Endothelial cell of umbilical vein (primary cell): ENCODE measurements at regions of chr22 and their contacts with region 1.

Region 1: DNA sequence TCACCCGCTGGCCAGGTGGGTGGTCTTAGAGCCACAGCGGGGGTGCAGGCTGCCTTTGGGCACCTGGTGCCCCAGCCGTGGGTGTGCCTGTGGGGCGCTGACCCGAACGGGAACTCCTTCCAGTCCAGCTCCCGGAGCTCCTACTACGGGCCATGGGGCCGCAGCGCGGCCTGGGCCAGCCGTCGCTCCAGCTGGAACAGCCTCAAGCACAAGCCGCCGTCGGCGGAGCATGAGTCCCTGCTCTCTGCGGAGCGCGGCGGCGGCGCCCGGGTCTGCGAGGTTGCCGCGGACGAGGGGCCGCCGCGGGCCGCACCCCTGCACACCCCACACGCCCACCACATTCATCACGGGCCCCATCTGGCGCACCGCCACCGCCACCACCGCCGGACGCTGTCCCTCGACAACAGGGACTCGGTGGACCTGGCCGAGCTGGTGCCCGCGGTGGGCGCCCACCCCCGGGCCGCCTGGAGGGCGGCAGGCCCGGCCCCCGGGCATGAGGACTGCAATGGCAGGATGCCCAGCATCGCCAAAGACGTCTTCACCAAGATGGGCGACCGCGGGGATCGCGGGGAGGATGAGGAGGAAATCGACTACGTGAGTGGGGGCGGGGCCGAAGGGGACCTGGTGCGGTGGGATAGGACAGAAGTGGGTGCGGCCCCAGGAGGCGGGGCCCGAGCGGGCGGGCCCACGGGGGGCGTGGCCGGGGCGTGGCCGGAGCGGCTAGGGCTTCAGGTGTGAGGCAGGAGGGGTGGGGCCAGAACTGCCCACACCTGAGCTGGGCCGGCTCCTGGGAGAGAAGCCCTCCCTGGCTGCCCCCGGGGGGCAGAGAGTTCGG is 91.5 kb downstream of the CACNA1I start:
- DNase-seq: no peak
- H3K4me3 ChIP-seq: no peak overlapping the region
- H3K27ac ChIP-seq: no peak overlapping the region
- H3K4me1 ChIP-seq: no peaks in the 10 kb centered on the region
- H3K27me3 ChIP-seq: peaks cover 25% of the 10 kb centered on the region in 2 experiments
- CTCF ChIP-seq: no peak
- POLR2A ChIP-seq: no peak

Region 2: GRCh38 chr22:39543095-39543494 is 119.0 kb before region 1 on chr22:
- CTCF ChIA-PET with region 1: no interaction called
- POLR2A ChIA-PET with region 1: no interaction called
- dilution Hi-C with region 1: no loop called
- intact Hi-C with region 1: no loop called
- DNase-seq: no peak
- H3K4me3 ChIP-seq: no peak overlapping the region
- H3K27ac ChIP-seq: no peak overlapping the region
- H3K4me1 ChIP-seq: no peaks in the 10 kb centered on the region
- H3K27me3 ChIP-seq: no peaks in the 10 kb centered on the region
- CTCF ChIP-seq: peak; percentile 39 to 68
- POLR2A ChIP-seq: no peak

Region 3: DNA sequence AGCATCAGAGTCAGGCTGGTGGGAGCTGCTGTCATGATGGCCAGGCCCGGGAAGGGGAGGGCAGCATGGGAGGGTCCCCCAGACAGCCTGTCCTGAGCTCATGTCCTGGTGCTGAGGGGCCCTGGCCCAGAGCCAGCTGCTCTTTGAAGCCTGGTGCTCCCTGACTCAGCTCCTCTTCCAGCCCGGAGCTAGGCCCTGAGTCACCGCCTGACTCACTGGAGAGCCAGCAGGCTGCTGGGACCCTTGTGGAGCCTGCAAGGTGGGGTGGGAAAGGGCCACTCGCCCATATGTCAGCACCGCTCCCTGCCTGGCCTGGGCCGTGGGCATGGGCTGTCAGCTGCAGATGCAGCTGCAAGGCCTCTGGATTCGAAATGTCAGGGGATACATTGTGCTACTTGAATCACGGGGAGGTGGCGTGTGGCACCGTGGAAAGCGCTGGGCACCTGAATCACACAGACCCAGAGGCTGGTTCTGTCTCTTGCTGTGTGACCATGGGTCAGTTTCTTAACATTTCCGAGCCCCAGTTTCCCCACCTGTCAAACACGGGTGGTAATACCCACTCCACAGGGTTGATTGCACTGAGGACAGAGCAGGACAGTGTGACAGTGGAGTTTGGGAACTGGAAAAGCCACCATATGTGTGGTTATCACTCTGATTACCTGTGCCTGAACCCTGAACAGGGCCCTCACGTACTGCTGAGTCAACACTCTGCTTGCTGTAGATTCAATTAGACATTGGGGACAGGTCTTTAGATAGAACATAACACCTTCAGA is 87.1 kb before region 1 on chr22:
- CTCF ChIA-PET with region 1: no interaction called
- POLR2A ChIA-PET with region 1: no interaction called
- dilution Hi-C with region 1: no loop called
- intact Hi-C with region 1: loop called (anchors 10 kb)
- DNase-seq: peak; percentile 80
- H3K4me3 ChIP-seq: no peak overlapping the region
- H3K27ac ChIP-seq: no peak overlapping the region
- H3K4me1 ChIP-seq: peaks cover 9% of the 10 kb centered on the region
- H3K27me3 ChIP-seq: no peaks in the 10 kb centered on the region
- CTCF ChIP-seq: no peak
- POLR2A ChIP-seq: no peak